Gastrocnemius medialis (tissue), 4 donors: ENCODE measurements at regions of chr12 and their contacts with region 1.

Region 1: DNA sequence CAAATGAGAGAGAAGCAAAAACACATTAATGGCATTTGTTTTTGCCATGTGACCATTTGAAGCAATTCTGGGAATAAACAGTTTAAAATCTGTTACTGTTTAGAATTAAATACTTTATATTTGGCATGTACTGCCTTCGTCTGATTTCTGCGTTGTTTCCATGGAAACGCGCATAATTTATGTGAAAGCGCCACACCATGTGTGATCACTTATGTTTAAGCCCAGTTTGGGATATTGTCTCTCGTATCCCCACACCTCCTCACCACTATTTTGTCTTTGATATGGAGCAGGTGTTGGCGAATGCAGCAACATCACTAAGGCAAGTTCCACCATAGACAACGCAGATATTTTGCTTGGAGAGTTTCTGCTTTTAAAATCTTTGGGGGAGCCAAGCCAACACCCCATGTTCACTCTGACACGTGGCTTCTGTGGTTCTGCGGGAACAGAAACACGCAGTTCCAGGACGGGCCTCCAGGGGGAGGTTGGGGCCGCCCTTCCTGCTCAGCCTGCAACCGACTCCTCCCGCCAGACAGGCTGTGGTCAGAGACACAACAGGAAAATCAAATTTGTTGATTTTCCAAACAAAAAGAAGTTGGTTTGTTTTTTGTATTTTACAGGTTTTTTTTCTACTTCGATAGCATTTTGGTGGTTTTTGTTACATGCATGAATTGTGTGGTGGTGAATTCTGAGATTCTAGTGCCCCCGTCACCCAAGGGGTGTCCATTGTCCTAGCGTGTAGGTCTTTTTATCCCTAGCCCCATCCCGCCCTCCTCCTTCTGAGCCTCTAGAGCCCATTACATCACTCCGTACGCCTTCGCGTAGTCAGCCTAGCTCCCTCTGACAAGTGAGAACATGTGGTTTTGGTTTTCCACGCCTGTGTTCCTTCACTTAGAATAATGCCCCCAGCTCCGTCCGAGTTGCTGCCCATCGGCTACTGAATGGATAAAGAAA is 101.9 kb upstream of the SFSWAP start:
- DNase-seq: peak; percentile 43 to 49
- ATAC-seq: peak; percentile 72 to 74
- H3K4me3 ChIP-seq: peak overlapping the region in 1 of 4 donors; percentile 32
- H3K27ac ChIP-seq: no peak overlapping the region
- H3K4me1 ChIP-seq: no peaks in the 10 kb centered on the region
- H3K27me3 ChIP-seq: peaks cover 2 to 8% (median 3%) of the 10 kb centered on the region in 3 donors
- CTCF ChIP-seq: peak; percentile 43 to 75 (median 61)
- POLR2A ChIP-seq: no peak

Region 2: GRCh38 chr12:131830335-131830913 is 221.4 kb after region 1 on chr12:
- in situ Hi-C with region 1: loop called in 1 of 4 experiments (anchors 25 kb)
- intact Hi-C with region 1: loop called (anchors 5 kb)
- DNase-seq: peak; percentile 42 to 61
- ATAC-seq: peak; percentile 46 to 65
- H3K4me3 ChIP-seq: peak overlapping the region; percentile 50 to 54 (median 52)
- H3K27ac ChIP-seq: peak overlapping the region in 3 of 4 donors; percentile 49 to 55 (median 52)
- H3K4me1 ChIP-seq: peaks cover 11 to 33% of the 10 kb centered on the region in 2 donors
- H3K27me3 ChIP-seq: peaks cover 59 to 78% (median 75%) of the 10 kb centered on the region in 3 donors
- CTCF ChIP-seq: peak; percentile 28 to 61 (median 51)
- POLR2A ChIP-seq: peak in 1 of 2 donors; percentile 21